Activated CD8-positive, alpha-beta T cell treated with anti-CD3 and anti-CD28 coated beads for 36 hours (primary cell): ENCODE measurements at regions of chr12 and their contacts with region 1.

Region 1: GRCh38 chr12:49296034-49296835 is 1.3 kb downstream of the PRPH start:
- DNase-seq: peak; percentile 73
- ATAC-seq: peak; percentile 82
- H3K4me3 Mint-ChIP-seq: peak overlapping the region; percentile 47
- H3K27ac Mint-ChIP-seq: no peak overlapping the region
- H3K4me1 Mint-ChIP-seq: peaks cover 13% of the 10 kb centered on the region
- H3K27me3 Mint-ChIP-seq: peaks cover 53% of the 10 kb centered on the region
- CTCF ChIP-seq: peak; percentile 97

Region 2: DNA sequence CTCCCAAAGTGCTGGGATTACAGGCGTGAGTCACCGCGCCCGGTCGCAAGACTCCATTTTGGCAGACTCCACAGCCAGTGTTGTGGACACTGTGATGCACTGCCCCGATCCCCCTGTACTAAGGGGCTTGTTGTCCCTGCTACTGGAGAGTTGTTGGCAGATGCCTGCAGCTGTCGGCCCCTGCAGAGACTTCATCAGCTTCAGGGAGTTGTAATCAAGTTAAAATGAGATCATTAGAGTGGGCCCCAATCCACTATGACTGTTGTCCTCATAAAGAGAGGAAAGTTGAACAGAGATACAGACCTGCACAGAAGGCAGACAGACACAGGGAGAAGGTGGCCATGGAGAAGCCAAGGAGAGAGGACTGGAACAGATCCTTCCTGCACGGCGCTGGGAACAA is 83.7 kb before region 1 on chr12:
- CTCF ChIA-PET with region 1: no interaction called
- POLR2A ChIA-PET with region 1: no interaction called
- intact Hi-C with region 1: no loop called
- DNase-seq: no peak
- ATAC-seq: no peak
- H3K4me3 Mint-ChIP-seq: no peak overlapping the region
- H3K27ac Mint-ChIP-seq: no peak overlapping the region
- H3K4me1 Mint-ChIP-seq: no peaks in the 10 kb centered on the region
- H3K27me3 Mint-ChIP-seq: peaks cover 2% of the 10 kb centered on the region
- CTCF ChIP-seq: no peak

Region 3: GRCh38 chr12:49279706-49280159 is 16.5 kb before region 1 on chr12:
- CTCF ChIA-PET with region 1: interaction called, 29 read pairs
- POLR2A ChIA-PET with region 1: interaction called, 3 read pairs
- intact Hi-C with region 1: no loop called
- DNase-seq: no peak
- ATAC-seq: no peak
- H3K4me3 Mint-ChIP-seq: no peak overlapping the region
- H3K27ac Mint-ChIP-seq: no peak overlapping the region
- H3K4me1 Mint-ChIP-seq: no peaks in the 10 kb centered on the region
- H3K27me3 Mint-ChIP-seq: peaks cover 9% of the 10 kb centered on the region
- CTCF ChIP-seq: no peak

Region 4: DNA sequence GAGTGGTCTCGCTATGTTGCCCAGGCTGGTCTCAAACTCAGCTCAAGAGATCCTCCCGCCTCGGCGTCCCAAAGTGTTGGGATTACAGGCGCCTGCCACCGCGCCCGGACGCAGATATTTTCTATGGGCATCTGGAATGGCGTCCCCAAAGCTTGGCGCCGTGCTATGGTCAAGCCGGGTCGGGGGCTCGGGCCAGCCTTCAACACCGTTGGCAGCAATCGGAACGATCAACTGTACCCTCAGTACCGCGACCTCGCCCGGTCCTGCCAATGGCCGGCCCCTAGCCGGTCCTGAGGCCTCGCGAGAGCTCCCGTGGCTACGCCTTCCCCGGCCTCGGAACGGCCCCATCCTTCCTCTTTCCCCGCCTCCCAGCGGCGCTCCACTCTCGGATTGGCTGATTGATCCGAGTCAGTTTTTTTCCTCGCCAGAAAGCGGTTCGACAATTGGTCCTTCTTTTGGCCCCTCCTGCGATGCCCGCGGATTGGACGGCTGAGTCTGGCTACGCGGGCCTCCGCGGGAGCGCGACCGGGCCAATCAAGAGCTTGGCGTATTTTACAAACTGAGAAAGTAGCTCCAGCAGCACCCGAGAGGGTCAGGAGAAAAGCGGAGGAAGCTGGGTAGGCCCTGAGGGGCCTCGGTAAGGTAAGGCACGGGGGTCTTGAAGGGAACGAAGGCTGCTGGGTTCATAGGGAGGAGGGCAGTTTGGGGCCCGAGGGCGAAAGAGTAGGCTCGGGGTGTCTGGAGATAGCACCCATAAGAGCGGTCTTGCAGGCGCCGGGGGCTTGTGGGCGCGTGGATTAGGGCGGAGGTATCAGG is 26.7 kb after region 1 on chr12 and contains the start of gene TROAP:
- CTCF ChIA-PET with region 1: interaction called, 32 read pairs
- POLR2A ChIA-PET with region 1: interaction called, 6 read pairs
- intact Hi-C with region 1: no loop called
- DNase-seq: peak; percentile 98
- ATAC-seq: peak; percentile 96
- H3K4me3 Mint-ChIP-seq: peak within 1 kb of the TSS; percentile 100
- H3K27ac Mint-ChIP-seq: peak within 1 kb of the TSS; percentile 92
- H3K4me1 Mint-ChIP-seq: peaks cover 10% of the 10 kb centered on the region
- H3K27me3 Mint-ChIP-seq: no peaks in the 10 kb centered on the region
- CTCF ChIP-seq: no peak
- total RNA-seq, gene TROAP: 46.6 to 52.6 TPM

Region 5: DNA sequence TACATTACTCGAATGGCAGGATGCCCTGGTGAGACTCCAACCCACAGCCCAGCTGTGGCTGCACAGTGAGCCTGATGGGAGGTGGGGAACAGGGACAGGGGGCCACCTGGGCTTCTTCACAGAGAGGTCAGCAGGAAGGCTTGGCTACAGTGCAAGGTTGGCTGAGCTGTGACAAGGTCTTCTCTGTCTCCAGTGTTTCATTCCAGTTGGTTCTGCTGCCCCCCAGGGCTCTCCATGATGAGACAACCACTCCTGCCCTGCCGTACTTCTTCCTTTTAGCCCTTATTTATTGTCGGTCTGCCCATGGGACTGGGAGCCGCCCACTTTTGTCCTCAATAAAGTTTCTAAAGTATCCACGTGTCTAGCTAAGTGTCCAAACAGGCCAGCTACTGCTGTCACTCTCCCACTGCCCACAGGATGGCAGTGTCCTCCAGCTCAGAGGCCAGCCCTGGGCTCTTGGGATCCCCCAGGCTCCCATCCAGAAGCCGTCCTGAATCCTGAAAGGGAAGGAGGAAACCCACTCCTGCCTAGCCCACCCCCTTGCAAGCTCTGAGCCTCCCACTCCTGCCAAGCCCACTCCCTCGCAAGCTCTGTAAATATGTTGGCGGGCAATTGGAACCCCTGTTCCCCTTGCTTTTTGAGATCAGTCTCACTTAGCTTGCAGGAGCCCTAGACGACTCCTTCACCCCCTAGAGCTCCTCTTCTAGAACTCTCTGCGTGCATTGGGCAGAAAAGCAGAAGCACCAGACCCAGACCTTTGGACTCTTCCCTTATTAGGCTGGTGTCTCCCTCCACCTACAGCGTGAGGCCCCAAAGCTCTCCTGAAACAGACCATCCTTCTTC is 35.4 kb after region 1 on chr12:
- CTCF ChIA-PET with region 1: interaction called, 29 read pairs
- POLR2A ChIA-PET with region 1: interaction called, 4 read pairs
- intact Hi-C with region 1: no loop called
- DNase-seq: peak; percentile 36
- ATAC-seq: peak; percentile 58
- H3K4me3 Mint-ChIP-seq: no peak overlapping the region
- H3K27ac Mint-ChIP-seq: no peak overlapping the region
- H3K4me1 Mint-ChIP-seq: peaks cover 3% of the 10 kb centered on the region
- H3K27me3 Mint-ChIP-seq: peaks cover 36% of the 10 kb centered on the region
- CTCF ChIP-seq: peak; percentile 56

Region 6: GRCh38 chr12:49336645-49337584 is 40.7 kb after region 1 on chr12 and contains the start of gene C1QL4:
- CTCF ChIA-PET with region 1: interaction called, 126 read pairs
- POLR2A ChIA-PET with region 1: interaction called, 5 read pairs
- intact Hi-C with region 1: no loop called
- DNase-seq: peak; percentile 90
- ATAC-seq: peak; percentile 89
- H3K4me3 Mint-ChIP-seq: peak within 1 kb of the TSS; percentile 35
- H3K27ac Mint-ChIP-seq: no peak within 1 kb of the TSS
- H3K4me1 Mint-ChIP-seq: peaks cover 15% of the 10 kb centered on the region
- H3K27me3 Mint-ChIP-seq: peaks cover 71% of the 10 kb centered on the region
- CTCF ChIP-seq: peak; percentile 96
- total RNA-seq, gene C1QL4: not detected

Region 7: DNA sequence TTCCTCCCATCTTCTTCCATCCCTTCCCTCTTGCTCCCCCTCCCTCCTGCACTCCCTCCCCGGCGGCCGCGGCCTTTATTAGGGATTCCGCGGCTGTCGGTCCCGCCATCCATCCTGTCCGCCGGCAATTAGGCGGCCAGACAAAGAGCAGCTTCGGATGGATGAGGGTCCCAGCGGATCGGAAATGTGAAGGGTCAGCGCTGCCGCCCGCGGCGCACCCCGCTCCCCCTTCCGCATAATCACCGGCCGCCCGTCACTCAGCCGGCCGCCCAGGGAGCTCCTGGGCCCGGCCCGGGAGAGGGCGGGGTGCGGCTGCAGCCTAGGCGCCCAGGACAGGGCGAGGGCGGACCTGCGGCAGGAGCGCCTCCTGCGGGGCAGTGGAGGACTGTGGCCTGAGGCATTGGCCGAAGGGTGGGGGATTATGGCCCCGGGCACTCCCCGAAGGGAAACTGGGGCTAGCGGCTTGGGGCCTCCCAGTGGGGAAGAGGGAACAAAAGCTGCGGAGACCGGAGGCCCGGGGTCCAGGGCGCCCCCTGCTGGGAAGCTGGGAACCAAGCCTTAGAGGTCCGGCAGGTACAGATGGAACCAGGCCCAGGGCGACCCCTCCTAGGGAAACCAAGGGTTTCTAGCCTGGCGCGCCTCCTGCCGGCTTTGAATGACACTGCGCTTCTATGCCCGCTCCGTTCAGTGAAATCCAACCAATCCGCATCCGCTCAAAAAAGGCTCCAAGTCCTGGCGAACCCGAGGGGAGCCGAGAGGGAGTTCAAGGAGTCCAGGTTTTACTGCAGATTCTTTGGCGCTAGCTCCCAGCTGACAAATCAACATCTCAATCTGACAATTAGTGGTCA is 46.1 kb after region 1 on chr12:
- CTCF ChIA-PET with region 1: interaction called, 145 read pairs
- POLR2A ChIA-PET with region 1: interaction called, 5 read pairs
- intact Hi-C with region 1: no loop called
- DNase-seq: peak; percentile 93
- ATAC-seq: peak; percentile 84
- H3K4me3 Mint-ChIP-seq: peak overlapping the region; percentile 53
- H3K27ac Mint-ChIP-seq: no peak overlapping the region
- H3K4me1 Mint-ChIP-seq: peaks cover 40% of the 10 kb centered on the region
- H3K27me3 Mint-ChIP-seq: peaks cover 69% of the 10 kb centered on the region
- CTCF ChIP-seq: peak; percentile 99